ENCODE measurements at regions of chr6 and their contacts with region 1.

Region 1: GRCh38 chr6:150129616-150130422 is 13.0 kb upstream of the PPP1R14C start:
- DNase-seq: no peak
- ATAC-seq: no peak
- H3K4me3 ChIP-seq: no peak overlapping the region
- H3K27ac ChIP-seq: no peak overlapping the region
- H3K4me1 ChIP-seq: no peaks in the 10 kb centered on the region
- H3K27me3 ChIP-seq: peaks cover 0 to 13% of the 10 kb centered on the region in 2 experiments; a peak in 2 of 5 replicates
- CTCF ChIP-seq: no peak
- EP300 ChIP-seq: no peak
- POLR2A ChIP-seq: no peak
- RAD21 ChIP-seq: no peak

Region 2: GRCh38 chr6:150068720-150069648 is 60.8 kb before region 1 on chr6 and contains the start of gene ULBP3:
- CTCF ChIA-PET with region 1: no interaction called
- POLR2A ChIA-PET with region 1: no interaction called
- in situ Hi-C with region 1: no loop called
- intact Hi-C with region 1: no loop called
- DNase-seq: peak; percentile 69
- ATAC-seq: peak; percentile 84
- H3K4me3 ChIP-seq: peak within 1 kb of the TSS; percentile 30 to 57 (median 37); a peak in 4 of 6 replicates
- H3K27ac ChIP-seq: no peak within 1 kb of the TSS
- H3K4me1 ChIP-seq: peaks cover 8% of the 10 kb centered on the region; the same call in 1 of the 2 replicates
- H3K27me3 ChIP-seq: peaks cover 0 to 21% of the 10 kb centered on the region in 2 experiments; a peak in 4 of 5 replicates
- CTCF ChIP-seq: peak; percentile 55
- EP300 ChIP-seq: no peak
- POLR2A ChIP-seq: no peak
- RAD21 ChIP-seq: no peak
- total RNA-seq, gene ULBP3: 0.42 and 0.56 TPM in 2 replicates

Region 3: GRCh38 chr6:150191809-150192208 is 62.0 kb after region 1 on chr6:
- CTCF ChIA-PET with region 1: no interaction called
- POLR2A ChIA-PET with region 1: no interaction called
- in situ Hi-C with region 1: no loop called
- intact Hi-C with region 1: no loop called
- DNase-seq: no peak
- ATAC-seq: no peak
- H3K4me3 ChIP-seq: no peak overlapping the region
- H3K27ac ChIP-seq: no peak overlapping the region
- H3K4me1 ChIP-seq: no peaks in the 10 kb centered on the region
- H3K27me3 ChIP-seq: peaks cover 0 to 9% of the 10 kb centered on the region in 2 experiments; a peak in 1 of 5 replicates
- CTCF ChIP-seq: no peak
- EP300 ChIP-seq: no peak
- POLR2A ChIP-seq: no peak
- RAD21 ChIP-seq: no peak

Region 4: GRCh38 chr6:150940941-150941340 is 811.1 kb after region 1 on chr6:
- CTCF ChIA-PET with region 1: no interaction called
- POLR2A ChIA-PET with region 1: no interaction called
- in situ Hi-C with region 1: no loop called
- intact Hi-C with region 1: loop called (anchors 10 kb)
- DNase-seq: no peak
- ATAC-seq: no peak
- H3K4me3 ChIP-seq: no peak overlapping the region
- H3K27ac ChIP-seq: no peak overlapping the region
- H3K4me1 ChIP-seq: no peaks in the 10 kb centered on the region
- H3K27me3 ChIP-seq: no peaks in the 10 kb centered on the region
- CTCF ChIP-seq: no peak
- EP300 ChIP-seq: no peak
- POLR2A ChIP-seq: no peak
- RAD21 ChIP-seq: no peak

Measured in HepG2 (cell line).